ENCODE measurements at regions of chr6 and their contacts with region 1.

Region 1: GRCh38 chr6:32984605-32985389 is 16.4 kb downstream of the BRD2 start:
- DNase-seq: peak; percentile 97
- H3K4me3 Mint-ChIP-seq: no peak overlapping the region
- H3K27ac Mint-ChIP-seq: no peak overlapping the region
- H3K4me1 Mint-ChIP-seq: peaks cover 14% of the 10 kb centered on the region
- H3K27me3 Mint-ChIP-seq: no peaks in the 10 kb centered on the region

Region 2: DNA sequence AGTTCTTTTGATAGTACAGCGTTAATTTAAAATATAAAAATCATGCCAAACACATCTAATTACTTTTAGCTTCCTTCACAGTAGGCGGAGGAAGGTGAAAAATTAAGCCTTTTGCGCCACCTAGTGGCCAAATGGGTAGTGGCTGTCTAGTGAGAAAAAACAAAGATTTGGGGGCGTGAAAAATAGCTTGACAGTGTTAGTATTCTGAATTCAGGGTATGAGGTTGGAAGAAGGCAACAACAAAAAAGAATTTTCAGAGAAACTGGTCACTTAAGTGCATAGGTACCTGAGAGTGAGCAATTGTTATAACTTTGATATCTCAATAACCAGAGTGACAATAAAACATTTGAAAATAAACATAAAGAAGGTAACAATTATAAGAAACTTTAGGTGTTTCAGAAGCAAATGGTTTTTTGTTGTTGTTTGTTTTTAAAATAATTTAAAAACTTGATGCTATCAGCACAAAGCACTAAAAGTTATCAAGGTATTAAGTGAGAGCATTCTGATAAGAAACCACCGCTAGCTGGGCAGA is 116.5 kb before region 1 on chr6:
- CTCF ChIA-PET with region 1: interaction called, 23 read pairs
- intact Hi-C with region 1: no loop called
- DNase-seq: peak; percentile 95
- H3K4me3 Mint-ChIP-seq: no peak overlapping the region
- H3K27ac Mint-ChIP-seq: no peak overlapping the region
- H3K4me1 Mint-ChIP-seq: peaks cover 39% of the 10 kb centered on the region
- H3K27me3 Mint-ChIP-seq: no peaks in the 10 kb centered on the region

Region 3: GRCh38 chr6:32885698-32886286 is 99.0 kb before region 1 on chr6:
- CTCF ChIA-PET with region 1: interaction called, 70 read pairs
- intact Hi-C with region 1: loop called (anchors 1 kb)
- DNase-seq: no peak
- H3K4me3 Mint-ChIP-seq: no peak overlapping the region
- H3K27ac Mint-ChIP-seq: no peak overlapping the region
- H3K4me1 Mint-ChIP-seq: peaks cover 9% of the 10 kb centered on the region
- H3K27me3 Mint-ChIP-seq: no peaks in the 10 kb centered on the region

Region 4: GRCh38 chr6:32906539-32906938 is 78.3 kb before region 1 on chr6:
- CTCF ChIA-PET with region 1: interaction called, 10 read pairs
- intact Hi-C with region 1: no loop called
- DNase-seq: no peak
- H3K4me3 Mint-ChIP-seq: no peak overlapping the region
- H3K27ac Mint-ChIP-seq: no peak overlapping the region
- H3K4me1 Mint-ChIP-seq: no peaks in the 10 kb centered on the region
- H3K27me3 Mint-ChIP-seq: peaks cover 2% of the 10 kb centered on the region

Region 5: GRCh38 chr6:32940656-32941213 is 44.1 kb before region 1 on chr6 and contains the start of gene HLA-DMB:
- CTCF ChIA-PET with region 1: interaction called, 145 read pairs
- intact Hi-C with region 1: loop called (anchors 2 kb)
- DNase-seq: peak; percentile 65
- H3K4me3 Mint-ChIP-seq: peak within 1 kb of the TSS; percentile 79
- H3K27ac Mint-ChIP-seq: peak within 1 kb of the TSS; percentile 78
- H3K4me1 Mint-ChIP-seq: peaks cover 57% of the 10 kb centered on the region
- H3K27me3 Mint-ChIP-seq: no peaks in the 10 kb centered on the region
- total RNA-seq, gene HLA-DMB: 0.76 to 1.3 TPM

Region 6: DNA sequence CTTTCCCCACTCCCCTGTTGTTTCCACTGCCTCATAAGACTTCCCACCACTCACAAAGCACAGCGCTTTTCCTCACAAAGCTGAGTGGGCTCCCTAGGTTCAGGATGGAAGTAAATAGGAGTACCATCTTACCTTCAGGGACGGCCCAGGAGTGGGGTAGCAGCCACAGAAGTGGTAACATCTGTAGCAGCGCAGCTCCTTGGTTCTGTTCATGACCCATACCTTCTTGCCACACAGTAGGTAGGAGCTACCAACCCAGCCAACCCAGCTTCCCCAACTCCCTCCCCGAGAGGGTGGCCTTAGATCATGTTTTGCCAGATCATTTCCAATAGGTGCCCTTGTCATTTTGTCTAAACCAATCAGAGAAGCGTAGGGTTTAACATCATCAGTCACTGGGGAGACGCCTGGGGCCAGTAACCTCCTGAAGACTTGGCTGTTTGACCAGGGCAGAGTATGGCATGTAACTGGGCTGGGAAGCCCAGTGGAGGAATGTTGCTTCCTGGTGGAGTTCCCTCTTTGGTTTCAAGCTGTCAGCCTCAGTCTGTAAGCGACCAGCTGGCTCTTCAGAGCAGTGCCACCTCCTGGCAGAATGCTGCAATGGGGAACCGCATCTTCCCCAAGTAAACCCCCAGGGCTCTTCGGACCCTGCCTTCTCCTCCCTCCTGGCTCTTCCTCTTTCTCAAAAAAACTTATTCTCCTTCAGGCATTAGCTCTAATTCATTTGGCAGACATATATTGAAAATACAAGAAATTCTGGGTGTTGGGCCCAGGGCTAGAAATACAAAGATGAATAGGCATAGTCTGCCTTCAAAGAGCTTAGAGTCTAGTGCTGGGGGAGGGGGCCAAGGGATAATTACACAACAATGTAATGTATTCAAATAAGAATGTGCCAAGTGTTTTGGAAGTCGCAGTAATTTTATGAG is 31.7 kb before region 1 on chr6 and contains the start of gene HLA-DMA:
- CTCF ChIA-PET with region 1: interaction called, 77 read pairs
- intact Hi-C with region 1: no loop called
- DNase-seq: peak; percentile 87
- H3K4me3 Mint-ChIP-seq: peak within 1 kb of the TSS; percentile 73
- H3K27ac Mint-ChIP-seq: peak within 1 kb of the TSS; percentile 60
- H3K4me1 Mint-ChIP-seq: peaks cover 47% of the 10 kb centered on the region
- H3K27me3 Mint-ChIP-seq: no peaks in the 10 kb centered on the region
- total RNA-seq, gene HLA-DMA: 12.7 to 14.5 TPM

Region 7: GRCh38 chr6:33147807-33148666 is 163.2 kb after region 1 on chr6:
- CTCF ChIA-PET with region 1: no interaction called
- intact Hi-C with region 1: no loop called
- DNase-seq: no peak
- H3K4me3 Mint-ChIP-seq: no peak overlapping the region
- H3K27ac Mint-ChIP-seq: no peak overlapping the region
- H3K4me1 Mint-ChIP-seq: no peaks in the 10 kb centered on the region
- H3K27me3 Mint-ChIP-seq: peaks cover 9% of the 10 kb centered on the region